Psoas muscle (tissue), 8 donors: ENCODE measurements at regions of chr3 and their contacts with region 1.

Region 1: GRCh38 chr3:142148792-142149672 is at the start of gene TFDP2:
- DNase-seq: peak; percentile 91 to 95
- ATAC-seq: peak; percentile 99 to 100 (median 99)
- H3K4me3 ChIP-seq: peak within 1 kb of the TSS; percentile 84
- H3K27ac ChIP-seq: peak within 1 kb of the TSS; percentile 84
- H3K4me1 ChIP-seq: peaks cover 21% of the 10 kb centered on the region
- H3K27me3 ChIP-seq: no peaks in the 10 kb centered on the region
- CTCF ChIP-seq: no peak
- total RNA-seq, gene TFDP2: 27.3 to 46.9 (median 33.1) TPM

Region 2: DNA sequence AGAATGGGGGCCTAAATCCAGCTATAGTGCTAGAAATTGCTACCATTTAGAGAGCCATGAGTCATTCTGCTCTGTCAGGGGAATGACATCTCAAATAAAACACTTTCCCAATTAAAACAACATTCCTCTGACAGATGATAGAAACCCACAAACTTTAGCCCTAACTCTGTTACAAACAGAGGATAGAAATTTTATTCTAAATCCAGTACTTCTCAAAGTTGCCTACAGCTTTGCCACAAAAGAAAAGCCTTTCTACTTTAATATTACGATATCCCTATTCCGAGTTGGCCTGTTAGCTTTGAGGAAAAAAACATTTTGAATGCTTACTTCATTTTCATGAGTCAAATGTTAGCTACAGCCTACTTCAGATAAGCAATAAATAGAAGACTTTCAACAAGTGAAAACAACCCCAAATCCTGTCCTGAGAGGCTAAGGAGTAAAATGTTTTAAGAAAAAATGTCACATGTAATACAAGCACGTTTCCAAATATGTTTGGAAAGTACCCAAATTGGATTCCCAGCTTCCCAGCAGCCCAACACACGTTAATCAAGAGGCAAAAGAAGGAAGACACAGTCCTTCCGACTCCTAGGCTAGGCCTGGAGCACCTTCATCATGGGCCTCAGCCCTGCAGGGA is 189.0 kb before region 1 on chr3:
- intact Hi-C with region 1: loop called in 1 of 2 experiments (anchors 10 kb)
- DNase-seq: no peak
- ATAC-seq: peak in 1 of 4 donors; percentile 21
- H3K4me3 ChIP-seq: no peak overlapping the region
- H3K27ac ChIP-seq: peak overlapping the region; percentile 31
- H3K4me1 ChIP-seq: no peaks in the 10 kb centered on the region
- H3K27me3 ChIP-seq: no peaks in the 10 kb centered on the region
- CTCF ChIP-seq: no peak

Region 3: DNA sequence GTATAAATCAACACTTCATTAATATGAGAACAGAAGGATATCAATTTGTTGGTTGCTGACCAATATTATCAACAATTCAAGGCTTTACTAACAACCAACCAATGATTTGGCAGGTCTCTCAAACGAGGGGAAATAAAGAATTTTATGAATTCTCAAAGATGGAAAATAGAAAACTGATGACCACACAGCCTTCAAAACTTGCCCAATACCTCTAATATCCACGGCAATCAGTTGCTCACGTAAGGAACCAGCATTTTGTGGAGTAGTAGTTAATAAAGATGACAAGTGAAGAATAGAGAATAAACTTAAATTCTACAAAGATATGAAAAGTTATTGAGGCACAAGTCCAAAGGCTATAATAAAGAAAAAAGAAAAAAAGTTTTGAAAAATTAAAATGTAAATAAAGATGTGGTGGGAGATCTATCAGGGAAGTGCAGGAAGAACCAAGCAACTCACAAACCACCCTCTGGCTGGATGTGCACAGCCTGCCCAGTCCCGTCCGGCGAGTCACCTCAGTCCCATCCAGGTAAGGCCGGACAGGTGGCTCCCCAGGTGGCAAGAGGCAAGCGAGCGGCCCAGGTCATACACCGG is 75.5 kb after region 1 on chr3:
- intact Hi-C with region 1: loop called in 1 of 2 experiments (anchors 5 kb)
- DNase-seq: no peak
- ATAC-seq: no peak
- H3K4me3 ChIP-seq: peak overlapping the region; percentile 97
- H3K27ac ChIP-seq: peak overlapping the region; percentile 82
- H3K4me1 ChIP-seq: peaks cover 16% of the 10 kb centered on the region
- H3K27me3 ChIP-seq: no peaks in the 10 kb centered on the region
- CTCF ChIP-seq: no peak